Caco-2 (cell line): ENCODE measurements at regions of chr1 and their contacts with region 1.

Region 1: GRCh38 chr1:21206117-21206516 is 29.4 kb upstream of the EIF4G3 start:
- DNase-seq: no peak
- H3K4me3 ChIP-seq: no peak overlapping the region
- H3K4me3 Mint-ChIP-seq: no peak overlapping the region
- H3K27ac Mint-ChIP-seq: no peak overlapping the region
- H3K4me1 ChIP-seq: no peaks in the 10 kb centered on the region
- H3K4me1 Mint-ChIP-seq: no peaks in the 10 kb centered on the region
- H3K27me3 ChIP-seq: no peaks in the 10 kb centered on the region
- H3K27me3 Mint-ChIP-seq: no peaks in the 10 kb centered on the region
- CTCF ChIP-seq: no peak

Region 2: DNA sequence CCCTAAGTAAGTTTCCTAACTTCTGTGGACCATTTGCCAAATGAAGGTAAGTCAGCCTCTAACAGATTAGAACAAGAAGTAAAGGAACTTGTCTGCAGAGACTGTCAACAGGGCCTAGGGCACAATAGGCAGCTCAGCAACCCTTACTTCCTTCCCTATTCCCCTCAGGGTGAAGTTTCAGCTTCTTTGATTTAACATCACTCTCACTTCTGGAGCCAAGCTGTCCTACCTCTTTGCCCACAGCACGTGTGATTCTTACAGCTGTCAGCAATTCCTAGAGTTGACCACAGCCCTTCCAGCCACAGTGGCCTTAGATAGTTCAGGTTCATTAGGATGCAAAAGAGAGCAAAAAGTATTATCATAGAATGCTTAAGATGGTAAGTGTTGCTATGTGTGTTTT is 21.8 kb before region 1 on chr1:
- CTCF ChIA-PET with region 1: no interaction called
- POLR2A ChIA-PET with region 1: no interaction called
- intact Hi-C with region 1: no loop called
- DNase-seq: no peak
- H3K4me3 ChIP-seq: no peak overlapping the region
- H3K4me3 Mint-ChIP-seq: no peak overlapping the region
- H3K27ac Mint-ChIP-seq: no peak overlapping the region
- H3K4me1 ChIP-seq: no peaks in the 10 kb centered on the region
- H3K4me1 Mint-ChIP-seq: no peaks in the 10 kb centered on the region
- H3K27me3 ChIP-seq: no peaks in the 10 kb centered on the region
- H3K27me3 Mint-ChIP-seq: no peaks in the 10 kb centered on the region
- CTCF ChIP-seq: no peak

Region 3: GRCh38 chr1:21514245-21514644 is 308.1 kb after region 1 on chr1:
- CTCF ChIA-PET with region 1: interaction called, 10 read pairs
- POLR2A ChIA-PET with region 1: no interaction called
- intact Hi-C with region 1: no loop called
- DNase-seq: no peak
- H3K4me3 ChIP-seq: no peak overlapping the region
- H3K4me3 Mint-ChIP-seq: no peak overlapping the region
- H3K27ac Mint-ChIP-seq: no peak overlapping the region
- H3K4me1 ChIP-seq: peaks cover 5% of the 10 kb centered on the region; the same call in 1 of the 2 replicates
- H3K4me1 Mint-ChIP-seq: no peaks in the 10 kb centered on the region
- H3K27me3 ChIP-seq: no peaks in the 10 kb centered on the region
- H3K27me3 Mint-ChIP-seq: no peaks in the 10 kb centered on the region
- CTCF ChIP-seq: no peak